ENCODE measurements at regions of chr17 and their contacts with region 1.

Region 1: DNA sequence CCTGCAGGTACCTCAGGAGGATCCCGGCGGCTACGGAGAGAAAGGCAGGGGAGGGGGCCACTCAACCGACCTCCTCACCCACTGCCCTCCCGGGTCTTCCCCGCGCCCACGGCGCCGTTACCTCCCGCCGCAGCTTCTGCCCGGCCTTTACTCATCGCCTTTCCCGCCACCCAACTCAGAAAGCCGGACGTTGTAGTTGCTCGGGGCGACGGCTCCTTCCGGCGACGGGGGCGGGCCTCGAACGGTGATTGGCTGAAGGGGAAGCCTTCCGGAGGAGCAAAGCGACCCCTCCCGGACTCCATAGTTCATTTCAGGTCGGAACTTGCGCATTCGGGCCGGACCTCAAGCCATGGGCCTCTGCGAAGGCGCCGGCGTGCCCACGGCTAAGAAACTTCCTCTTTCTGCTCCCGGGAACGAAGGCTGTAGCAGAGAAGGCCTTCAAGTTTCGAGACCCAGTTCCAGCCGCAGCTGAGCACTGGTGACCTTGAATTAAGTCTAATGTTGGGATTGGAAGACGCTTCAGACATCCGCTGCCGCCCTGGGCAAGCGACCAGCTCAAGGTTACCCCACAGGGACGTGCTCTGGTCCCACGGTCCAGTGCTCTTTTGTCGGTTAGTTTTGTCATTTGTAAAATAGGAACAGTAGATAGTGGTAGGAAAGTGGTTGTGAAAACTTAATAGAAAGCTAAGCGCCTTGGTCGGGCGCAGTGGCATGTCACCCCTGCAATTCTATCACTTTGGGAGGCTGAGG is at the start of gene PSMC3IP:
- H3K4me3 ChIP-seq: peak within 1 kb of the TSS; percentile 91
- H3K27ac ChIP-seq: peak within 1 kb of the TSS; percentile 92
- H3K4me1 ChIP-seq: peaks cover 4% of the 10 kb centered on the region
- CTCF ChIP-seq: peak; percentile 75

Region 2: DNA sequence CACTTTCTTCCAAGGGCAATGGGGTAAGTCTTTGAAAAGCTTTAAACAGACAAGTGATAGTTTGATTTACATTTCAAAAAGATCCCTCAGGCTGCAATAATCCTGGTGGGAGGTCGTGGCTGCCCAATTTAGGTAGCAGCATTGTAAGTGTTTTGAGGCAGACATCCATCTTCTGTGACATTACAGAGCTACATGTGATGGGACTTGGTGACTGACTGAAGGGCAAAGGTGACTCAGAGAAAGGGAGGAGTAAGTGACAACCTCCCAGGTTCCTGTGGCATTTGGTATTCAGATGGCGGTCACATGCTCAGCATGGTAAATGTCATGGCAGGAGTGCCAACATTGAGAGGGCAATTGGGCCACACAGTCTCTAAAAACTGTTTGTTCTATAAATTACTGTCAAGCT is 215.9 kb before region 1 on chr17:
- CTCF ChIA-PET with region 1: no interaction called
- POLR2A ChIA-PET with region 1: no interaction called
- H3K4me3 ChIP-seq: no peak overlapping the region
- H3K27ac ChIP-seq: no peak overlapping the region
- H3K4me1 ChIP-seq: peaks cover 13% of the 10 kb centered on the region; the same call in 1 of the 2 replicates
- CTCF ChIP-seq: no peak

Region 3: GRCh38 chr17:42484304-42484703 is 93.4 kb before region 1 on chr17:
- CTCF ChIA-PET with region 1: no interaction called
- POLR2A ChIA-PET with region 1: no interaction called
- H3K4me3 ChIP-seq: no peak overlapping the region
- H3K27ac ChIP-seq: no peak overlapping the region
- H3K4me1 ChIP-seq: no peaks in the 10 kb centered on the region
- CTCF ChIP-seq: no peak

Region 4: GRCh38 chr17:42554250-42555121 is 23.2 kb before region 1 on chr17:
- CTCF ChIA-PET with region 1: interaction called, 12 read pairs
- POLR2A ChIA-PET with region 1: interaction called, 16 read pairs
- H3K4me3 ChIP-seq: peak overlapping the region; percentile 68
- H3K27ac ChIP-seq: peak overlapping the region; percentile 95
- H3K4me1 ChIP-seq: peaks cover 5% of the 10 kb centered on the region; the same call in 1 of the 2 replicates
- CTCF ChIP-seq: peak; percentile 73

Region 5: DNA sequence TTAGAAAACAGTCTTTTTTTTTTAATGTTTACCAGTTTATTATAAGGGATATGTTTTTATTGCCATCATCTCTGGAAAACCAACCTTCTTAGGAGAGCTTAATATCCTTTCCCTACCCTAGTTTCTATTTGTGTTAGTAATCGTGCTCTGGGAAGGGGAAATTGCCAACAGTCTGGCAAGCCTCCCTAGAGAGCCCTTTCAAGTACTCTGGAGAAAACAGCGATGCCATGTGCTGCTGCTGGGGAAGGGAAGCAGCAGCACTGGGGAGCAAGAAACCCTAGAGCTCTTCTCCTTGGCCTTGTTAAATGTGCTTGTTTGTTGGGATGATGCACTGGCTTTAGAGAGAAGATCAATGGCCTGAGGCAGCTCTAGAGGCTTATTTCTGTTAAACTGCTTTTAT is 21.2 kb after region 1 on chr17:
- CTCF ChIA-PET with region 1: interaction called, 19 read pairs
- POLR2A ChIA-PET with region 1: interaction called, 6 read pairs
- H3K4me3 ChIP-seq: no peak overlapping the region
- H3K27ac ChIP-seq: no peak overlapping the region
- H3K4me1 ChIP-seq: peaks cover 3% of the 10 kb centered on the region; the same call in 1 of the 2 replicates
- CTCF ChIP-seq: no peak

Region 6: DNA sequence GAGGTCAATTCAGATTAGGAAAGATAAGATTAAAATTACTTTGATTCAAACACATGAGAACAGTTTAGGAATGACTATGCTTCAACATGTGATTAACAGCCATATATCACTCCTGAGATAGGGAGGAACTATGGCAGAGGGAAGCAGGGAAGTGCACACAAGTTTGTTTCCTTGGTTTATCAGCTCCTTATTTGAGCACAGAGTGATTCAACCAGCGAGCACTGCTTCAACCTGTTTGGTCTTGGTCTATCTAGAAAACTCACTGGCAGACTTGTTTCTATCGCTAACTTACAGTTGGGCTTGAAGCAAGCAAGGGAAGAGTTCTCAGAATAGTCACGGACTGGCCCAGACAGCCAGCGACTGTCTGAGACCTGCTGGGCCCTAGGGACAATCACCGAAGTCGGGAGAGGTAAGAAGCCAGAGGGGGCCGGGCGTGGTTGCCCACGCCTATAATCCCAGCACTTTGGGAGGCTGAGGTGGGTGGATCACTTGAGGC is 55.3 kb after region 1 on chr17:
- CTCF ChIA-PET with region 1: interaction called, 10 read pairs
- POLR2A ChIA-PET with region 1: interaction called, 4 read pairs
- H3K4me3 ChIP-seq: no peak overlapping the region
- H3K27ac ChIP-seq: 0 out of 2 replicates have a peak overlapping the region, but pooled peaks have one; percentile 1
- H3K4me1 ChIP-seq: no peaks in the 10 kb centered on the region
- CTCF ChIP-seq: no peak

Region 7: GRCh38 chr17:42697108-42697811 is 119.6 kb after region 1 on chr17:
- CTCF ChIA-PET with region 1: interaction called, 12 read pairs
- POLR2A ChIA-PET with region 1: no interaction called
- H3K4me3 ChIP-seq: no peak overlapping the region
- H3K27ac ChIP-seq: no peak overlapping the region
- H3K4me1 ChIP-seq: no peaks in the 10 kb centered on the region
- CTCF ChIP-seq: no peak

Region 8: GRCh38 chr17:42773290-42774035 is 195.8 kb after region 1 on chr17 and contains the start of gene VPS25:
- CTCF ChIA-PET with region 1: interaction called, 15 read pairs
- POLR2A ChIA-PET with region 1: interaction called, 10 read pairs
- H3K4me3 ChIP-seq: peak within 1 kb of the TSS; percentile 94
- H3K27ac ChIP-seq: peak within 1 kb of the TSS; percentile 64
- H3K4me1 ChIP-seq: peaks cover 4% of the 10 kb centered on the region; the same call in 1 of the 2 replicates
- CTCF ChIP-seq: peak; percentile 79

Region 9: DNA sequence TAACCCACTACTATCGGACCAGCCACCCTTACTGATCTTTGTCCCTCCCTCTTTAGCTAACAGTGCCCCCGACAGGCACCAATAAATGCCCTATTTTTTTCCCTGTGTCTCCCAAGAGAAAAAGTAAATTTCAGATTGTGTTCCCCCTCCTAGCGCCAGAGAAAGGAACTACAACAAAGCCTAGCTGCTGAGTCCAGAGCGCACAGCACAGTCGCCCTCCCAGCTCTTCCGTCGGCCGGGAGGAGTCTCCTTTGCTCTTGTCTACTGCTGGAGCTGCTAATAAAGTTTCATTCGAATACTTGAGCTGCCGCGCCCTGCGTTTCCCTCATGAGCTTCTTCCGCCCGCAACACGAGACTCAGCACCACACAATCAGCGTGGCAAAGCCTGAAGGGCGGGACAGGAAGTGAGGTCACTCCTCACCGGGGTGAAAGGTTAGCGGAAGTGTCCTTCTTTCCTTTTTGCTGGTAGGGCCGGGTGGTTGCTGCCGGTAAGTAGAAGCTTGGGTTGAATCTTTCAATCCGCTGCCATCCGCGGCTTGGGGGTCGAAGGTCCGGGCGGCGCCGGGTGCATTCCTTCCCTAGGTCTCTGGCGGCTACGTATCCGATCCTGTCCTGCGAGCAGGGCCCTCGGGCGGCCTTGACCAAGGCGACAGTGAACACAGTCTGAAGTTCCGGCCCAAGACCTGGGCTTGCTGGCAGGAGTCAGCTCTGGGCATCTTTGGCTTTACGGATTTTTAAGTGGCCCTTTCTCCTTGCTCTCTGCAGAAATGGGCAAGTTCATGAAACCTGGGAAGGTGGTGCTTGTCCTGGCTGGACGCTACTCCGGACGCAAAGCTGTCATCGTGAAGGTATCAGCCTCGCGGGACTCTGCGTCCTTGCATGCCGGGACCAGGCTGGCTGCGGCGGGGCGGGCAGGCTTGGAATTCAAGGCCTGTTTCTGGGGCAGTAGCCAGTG is 420.6 kb after region 1 on chr17 and contains the start of gene RPL27:
- CTCF ChIA-PET with region 1: interaction called, 13 read pairs
- POLR2A ChIA-PET with region 1: interaction called, 9 read pairs
- H3K4me3 ChIP-seq: peak within 1 kb of the TSS; percentile 64
- H3K27ac ChIP-seq: peak within 1 kb of the TSS; percentile 99
- H3K4me1 ChIP-seq: peaks cover 12% of the 10 kb centered on the region
- CTCF ChIP-seq: peak; percentile 94

Measured in HEK293 (cell line).